ENCODE measurements at regions of chr11 and their contacts with region 1.

Region 1: GRCh38 chr11:104152941-104153505 is 10.9 kb downstream of the PDGFD start:
- DNase-seq: peak in 1 of 2 donors; percentile 12
- ATAC-seq: peak; percentile 89 to 94 (median 92)
- H3K4me3 ChIP-seq: peak overlapping the region; percentile 1
- H3K4me3 Mint-ChIP-seq: peak overlapping the region; percentile 75
- H3K27ac ChIP-seq: peak overlapping the region; percentile 61
- H3K27ac Mint-ChIP-seq: peak overlapping the region; percentile 84 to 87
- H3K4me1 ChIP-seq: no peaks in the 10 kb centered on the region
- H3K4me1 Mint-ChIP-seq: peaks cover 71 to 79% of the 10 kb centered on the region in 2 donors
- H3K27me3 ChIP-seq: no peaks in the 10 kb centered on the region
- H3K27me3 Mint-ChIP-seq: no peaks in the 10 kb centered on the region
- CTCF ChIP-seq: no peak

Region 2: DNA sequence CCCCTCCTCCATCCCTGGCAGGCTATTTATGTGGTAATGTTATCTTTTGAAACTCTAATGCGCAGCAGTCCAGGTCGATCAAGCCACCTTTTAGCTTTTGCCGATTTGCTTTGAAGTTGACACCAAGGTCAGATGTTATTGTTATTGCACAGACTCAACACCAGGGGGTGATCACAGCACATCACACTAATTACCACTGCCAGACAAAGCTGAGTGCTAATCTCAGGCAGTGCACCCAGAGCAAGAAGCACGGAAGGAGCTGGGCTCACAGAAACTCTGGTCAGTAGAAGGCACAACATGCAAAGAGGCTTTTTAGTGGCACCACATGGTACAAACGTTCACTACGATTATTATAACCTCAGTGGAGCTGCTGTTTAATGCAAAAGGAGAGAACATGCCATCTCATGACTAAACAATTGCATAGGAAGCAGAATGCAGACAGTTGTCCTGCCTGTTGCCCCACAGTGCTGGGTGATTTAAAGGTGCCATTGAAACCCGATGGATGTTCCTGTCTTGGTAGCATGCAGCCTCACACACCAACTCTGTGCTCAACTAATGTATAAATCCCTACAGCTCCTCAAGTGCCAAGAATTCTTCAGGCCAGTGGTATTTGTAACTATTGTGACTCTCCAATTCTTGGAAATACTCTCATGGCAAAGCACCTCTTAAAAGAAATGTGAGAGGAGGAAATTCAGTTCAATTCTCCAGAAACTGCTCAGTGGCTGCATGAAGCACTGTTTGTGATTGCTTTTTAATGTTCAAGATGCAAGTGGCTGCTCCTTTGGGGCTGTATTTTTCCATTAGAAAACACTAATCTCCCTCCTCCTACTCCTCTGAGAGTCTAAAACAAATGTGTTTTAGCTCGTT is 470.5 kb before region 1 on chr11:
- intact Hi-C with region 1: loop called (anchors 1 kb)
- DNase-seq: peak; percentile 37 to 73
- ATAC-seq: peak; percentile 89 to 100 (median 99)
- H3K4me3 ChIP-seq: no peak overlapping the region
- H3K4me3 Mint-ChIP-seq: peak overlapping the region; percentile 29
- H3K27ac ChIP-seq: no peak overlapping the region
- H3K27ac Mint-ChIP-seq: peak overlapping the region in 1 of 2 donors; percentile 56
- H3K4me1 ChIP-seq: peaks cover 3% of the 10 kb centered on the region
- H3K4me1 Mint-ChIP-seq: peaks cover 7% of the 10 kb centered on the region in 2 donors
- H3K27me3 ChIP-seq: no peaks in the 10 kb centered on the region
- H3K27me3 Mint-ChIP-seq: peaks cover 2 to 7% of the 10 kb centered on the region in 2 donors
- CTCF ChIP-seq: peak; percentile 68

Region 3: GRCh38 chr11:104164028-104164520 is 11.1 kb after region 1 on chr11 and contains the start of gene PDGFD:
- intact Hi-C with region 1: loop called (anchors 1 kb)
- DNase-seq: peak; percentile 68 to 75
- ATAC-seq: peak; percentile 94
- H3K4me3 ChIP-seq: peak within 1 kb of the TSS; percentile 71
- H3K4me3 Mint-ChIP-seq: peak within 1 kb of the TSS; percentile 98
- H3K27ac ChIP-seq: peak within 1 kb of the TSS; percentile 77
- H3K27ac Mint-ChIP-seq: peak within 1 kb of the TSS; percentile 77 to 86
- H3K4me1 ChIP-seq: peaks cover 12% of the 10 kb centered on the region
- H3K4me1 Mint-ChIP-seq: peaks cover 32 to 55% of the 10 kb centered on the region in 2 donors
- H3K27me3 ChIP-seq: no peaks in the 10 kb centered on the region
- H3K27me3 Mint-ChIP-seq: no peaks in the 10 kb centered on the region
- CTCF ChIP-seq: peak; percentile 50
- total RNA-seq, gene PDGFD: 23.2 to 41.2 (median 33.1) TPM

Region 4: GRCh38 chr11:104547996-104548661 is 395.1 kb after region 1 on chr11:
- intact Hi-C with region 1: no loop called
- DNase-seq: peak in 1 of 2 donors; percentile 5
- ATAC-seq: no peak
- H3K4me3 ChIP-seq: no peak overlapping the region
- H3K4me3 Mint-ChIP-seq: no peak overlapping the region
- H3K27ac ChIP-seq: no peak overlapping the region
- H3K27ac Mint-ChIP-seq: no peak overlapping the region
- H3K4me1 ChIP-seq: no peaks in the 10 kb centered on the region
- H3K4me1 Mint-ChIP-seq: peaks cover 7 to 8% of the 10 kb centered on the region in 2 donors
- H3K27me3 ChIP-seq: peaks cover 2% of the 10 kb centered on the region
- H3K27me3 Mint-ChIP-seq: peaks cover 0 to 19% of the 10 kb centered on the region in 2 donors
- CTCF ChIP-seq: no peak

Measured in natural killer cell (primary cell).